ENCODE measurements at regions of chr12 and their contacts with region 1.

Region 1: GRCh38 chr12:26195641-26196420 is 458 bp downstream of the SSPN start:
- DNase-seq: peak; percentile 63 to 67
- ATAC-seq: peak; percentile 86

Region 2: GRCh38 chr12:26126340-26127284 is 69.2 kb before region 1 on chr12:
- intact Hi-C with region 1: loop called in 1 of 2 experiments (anchors 10 kb)
- DNase-seq: peak; percentile 87
- ATAC-seq: peak; percentile 76